Mammary epithelial cell (primary cell): ENCODE measurements at regions of chr18 and their contacts with region 1.

Region 1: GRCh38 chr18:27298214-27298804 is 113.2 kb upstream of the CHST9 start:
- DNase-seq: peak; percentile 8
- H3K4me3 ChIP-seq: no peak overlapping the region
- H3K27ac ChIP-seq: no peak overlapping the region
- H3K4me1 ChIP-seq: no peaks in the 10 kb centered on the region
- H3K27me3 ChIP-seq: no peaks in the 10 kb centered on the region
- CTCF ChIP-seq: peak; percentile 44 to 66

Region 2: GRCh38 chr18:26804519-26804918 is 493.8 kb before region 1 on chr18:
- CTCF ChIA-PET with region 1: no interaction called
- dilution Hi-C with region 1: no loop called
- in situ Hi-C with region 1: no loop called
- intact Hi-C with region 1: loop called (anchors 10 kb)
- DNase-seq: no peak
- H3K4me3 ChIP-seq: no peak overlapping the region
- H3K27ac ChIP-seq: no peak overlapping the region
- H3K4me1 ChIP-seq: no peaks in the 10 kb centered on the region
- H3K27me3 ChIP-seq: no peaks in the 10 kb centered on the region
- CTCF ChIP-seq: peak in 1 of 2 donors; percentile 32

Region 3: GRCh38 chr18:27164905-27165304 is 133.4 kb before region 1 on chr18:
- CTCF ChIA-PET with region 1: no interaction called
- dilution Hi-C with region 1: no loop called
- in situ Hi-C with region 1: no loop called
- intact Hi-C with region 1: loop called (anchors 10 kb)
- DNase-seq: no peak
- H3K4me3 ChIP-seq: no peak overlapping the region
- H3K27ac ChIP-seq: no peak overlapping the region
- H3K4me1 ChIP-seq: no peaks in the 10 kb centered on the region
- H3K27me3 ChIP-seq: peaks cover 2% of the 10 kb centered on the region
- CTCF ChIP-seq: no peak